Calu3 (cell line): ENCODE measurements at regions of chr16 and their contacts with region 1.

Region 1: DNA sequence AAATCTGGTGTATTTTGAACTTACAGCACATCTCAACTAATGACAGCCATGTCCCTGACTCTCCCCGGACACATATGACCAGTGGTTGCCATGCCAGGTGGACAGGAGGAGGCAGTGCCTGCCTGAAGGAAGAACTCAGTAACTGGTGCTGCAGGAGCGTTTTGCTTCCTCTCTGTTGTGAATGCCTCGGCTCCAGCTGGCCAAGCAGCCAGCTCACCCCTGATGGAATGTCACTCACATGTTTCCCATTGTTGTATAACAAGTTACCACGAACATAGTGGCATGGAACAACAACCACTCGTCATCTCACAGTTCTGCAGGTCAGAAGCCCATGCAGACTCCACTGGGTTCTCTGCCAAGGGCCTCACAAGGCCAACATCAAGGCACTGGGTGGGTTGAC is 20.1 kb upstream of the IRF8 start:
- DNase-seq: peak; percentile 74
- H3K4me3 Mint-ChIP-seq: no peak overlapping the region
- H3K27ac Mint-ChIP-seq: no peak overlapping the region
- H3K4me1 Mint-ChIP-seq: peaks cover 11% of the 10 kb centered on the region
- H3K27me3 Mint-ChIP-seq: peaks cover 55% of the 10 kb centered on the region
- CTCF ChIP-seq: peak; percentile 31

Region 2: DNA sequence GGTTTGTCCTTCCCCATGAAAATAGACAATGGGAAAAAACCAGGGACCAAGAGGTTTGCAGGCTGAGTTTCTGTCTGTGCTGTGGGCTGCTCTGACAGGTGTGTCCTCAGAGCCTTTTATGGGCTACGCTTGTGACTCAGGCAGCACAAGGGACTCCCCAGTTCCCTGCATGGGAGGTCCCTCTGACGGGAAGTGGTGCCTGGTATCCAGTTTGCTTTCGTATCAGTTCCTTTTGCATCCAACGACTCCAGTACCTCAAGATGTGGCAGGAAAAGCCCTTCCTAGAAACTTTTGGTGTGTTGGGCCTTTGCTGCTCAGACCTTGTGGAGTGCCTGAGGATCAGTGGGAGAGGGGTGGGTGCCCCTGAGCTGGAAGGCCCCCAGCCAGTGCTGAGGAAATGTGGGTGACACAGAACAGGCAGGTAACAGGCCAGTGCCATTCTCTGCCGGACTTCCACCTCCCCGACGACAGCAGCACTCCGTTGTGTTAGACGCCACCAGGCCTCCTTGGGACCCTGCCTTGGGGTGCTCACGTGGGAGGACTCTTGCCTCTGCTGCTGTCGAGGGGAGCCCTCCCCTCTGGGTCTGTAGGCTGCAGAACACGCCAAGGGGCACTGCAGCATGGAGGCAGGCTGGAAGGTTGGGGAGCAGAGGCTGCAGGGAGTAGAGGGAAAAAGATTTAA is 18.3 kb before region 1 on chr16:
- CTCF ChIA-PET with region 1: no interaction called
- intact Hi-C with region 1: no loop called
- DNase-seq: no peak
- H3K4me3 Mint-ChIP-seq: no peak overlapping the region
- H3K27ac Mint-ChIP-seq: no peak overlapping the region
- H3K4me1 Mint-ChIP-seq: no peaks in the 10 kb centered on the region
- H3K27me3 Mint-ChIP-seq: peaks cover 35% of the 10 kb centered on the region
- CTCF ChIP-seq: no peak

Region 3: DNA sequence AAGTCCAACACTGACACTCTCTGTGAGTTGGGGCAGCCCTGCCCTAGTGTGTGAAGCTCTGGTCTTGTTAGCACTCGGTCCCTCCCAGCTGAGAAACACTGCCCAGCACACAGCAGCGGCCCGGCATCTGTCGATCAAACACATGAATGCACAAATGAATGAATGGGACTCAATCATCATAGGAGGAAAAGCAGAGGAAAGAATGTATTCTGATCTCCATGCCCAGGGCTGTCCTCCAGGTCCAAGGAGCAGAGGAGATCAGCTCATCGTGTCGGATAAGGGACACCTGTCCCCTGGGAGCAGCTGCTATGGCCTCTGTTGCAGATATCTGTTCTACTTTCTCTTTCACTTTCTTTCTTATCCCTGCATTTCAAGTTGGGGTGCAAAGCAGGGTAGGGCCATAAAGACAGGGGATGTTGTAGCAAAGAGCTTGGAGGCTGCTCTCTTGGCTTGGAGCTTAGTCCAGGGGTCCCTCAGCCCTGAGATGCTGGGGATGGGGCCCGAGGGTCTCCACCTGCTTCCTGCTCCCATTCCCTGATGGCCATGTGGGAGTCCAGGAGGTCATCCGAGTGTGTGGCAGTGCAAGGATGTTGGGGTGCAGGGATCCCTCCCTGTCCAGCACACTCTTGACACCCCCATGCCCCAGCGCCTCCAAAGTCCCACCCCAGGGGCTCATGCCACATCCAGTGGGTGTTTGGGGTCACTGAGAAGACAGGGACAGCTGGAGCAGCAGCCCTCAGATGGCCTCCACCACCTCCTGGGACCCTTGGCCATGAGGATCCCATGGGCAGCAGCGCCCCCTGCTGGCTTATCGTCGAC is 108.3 kb after region 1 on chr16:
- CTCF ChIA-PET with region 1: interaction called, 11 read pairs
- intact Hi-C with region 1: loop called (anchors 2 kb)
- DNase-seq: peak; percentile 44
- H3K4me3 Mint-ChIP-seq: peak overlapping the region; percentile 48
- H3K27ac Mint-ChIP-seq: no peak overlapping the region
- H3K4me1 Mint-ChIP-seq: peaks cover 8% of the 10 kb centered on the region
- H3K27me3 Mint-ChIP-seq: peaks cover 45% of the 10 kb centered on the region
- CTCF ChIP-seq: peak; percentile 94